ENCODE measurements at regions of chr2 and their contacts with region 1.

Region 1: DNA sequence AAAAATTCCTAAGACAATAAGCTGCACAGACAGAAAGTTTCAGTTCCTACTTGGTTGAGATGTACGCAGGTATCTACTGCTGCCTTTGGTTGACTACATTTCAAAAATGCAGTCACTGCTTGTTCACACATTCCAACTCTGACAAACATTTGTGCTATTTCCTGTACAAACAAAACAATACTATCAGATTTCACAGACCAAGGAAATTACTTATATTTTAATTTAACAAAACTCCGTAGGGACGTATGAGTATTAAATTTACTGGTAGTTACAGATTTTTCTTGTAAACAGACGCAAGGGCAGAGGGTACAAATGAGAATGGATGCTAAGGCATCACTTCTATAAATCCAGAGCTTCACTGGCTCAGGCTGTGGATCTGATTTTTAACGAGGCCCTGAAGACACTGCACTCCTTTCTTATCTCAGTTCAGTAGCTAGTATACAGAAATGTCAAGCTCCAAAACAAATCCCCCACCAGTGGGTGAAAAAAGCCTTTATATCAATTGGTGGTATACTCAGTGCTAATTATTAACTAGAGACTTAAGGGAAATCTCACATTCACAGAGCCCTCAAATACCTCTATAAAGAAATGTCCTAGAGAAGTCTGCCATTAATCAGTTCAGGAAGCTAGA is 31.7 kb upstream of the TTC32 start:
- DNase-seq: peak; percentile 33 to 95
- H3K4me3 ChIP-seq: peak overlapping the region; percentile 48
- H3K27ac ChIP-seq: peak overlapping the region; percentile 97
- H3K4me1 ChIP-seq: peaks cover 35% of the 10 kb centered on the region
- H3K27me3 ChIP-seq: no peaks in the 10 kb centered on the region
- CTCF ChIP-seq: 0 out of 2 replicates have a peak, but pooled peaks have one; percentile 13

Region 2: GRCh38 chr2:19819097-19820065 is 114.1 kb before region 1 on chr2:
- CTCF ChIA-PET with region 1: no interaction called
- POLR2A ChIA-PET with region 1: interaction called, 17 read pairs
- intact Hi-C with region 1: no loop called
- DNase-seq: peak; percentile 74 to 96
- H3K4me3 ChIP-seq: no peak overlapping the region
- H3K27ac ChIP-seq: peak overlapping the region; percentile 63
- H3K4me1 ChIP-seq: peaks cover 24% of the 10 kb centered on the region
- H3K27me3 ChIP-seq: no peaks in the 10 kb centered on the region
- CTCF ChIP-seq: no peak

Region 3: DNA sequence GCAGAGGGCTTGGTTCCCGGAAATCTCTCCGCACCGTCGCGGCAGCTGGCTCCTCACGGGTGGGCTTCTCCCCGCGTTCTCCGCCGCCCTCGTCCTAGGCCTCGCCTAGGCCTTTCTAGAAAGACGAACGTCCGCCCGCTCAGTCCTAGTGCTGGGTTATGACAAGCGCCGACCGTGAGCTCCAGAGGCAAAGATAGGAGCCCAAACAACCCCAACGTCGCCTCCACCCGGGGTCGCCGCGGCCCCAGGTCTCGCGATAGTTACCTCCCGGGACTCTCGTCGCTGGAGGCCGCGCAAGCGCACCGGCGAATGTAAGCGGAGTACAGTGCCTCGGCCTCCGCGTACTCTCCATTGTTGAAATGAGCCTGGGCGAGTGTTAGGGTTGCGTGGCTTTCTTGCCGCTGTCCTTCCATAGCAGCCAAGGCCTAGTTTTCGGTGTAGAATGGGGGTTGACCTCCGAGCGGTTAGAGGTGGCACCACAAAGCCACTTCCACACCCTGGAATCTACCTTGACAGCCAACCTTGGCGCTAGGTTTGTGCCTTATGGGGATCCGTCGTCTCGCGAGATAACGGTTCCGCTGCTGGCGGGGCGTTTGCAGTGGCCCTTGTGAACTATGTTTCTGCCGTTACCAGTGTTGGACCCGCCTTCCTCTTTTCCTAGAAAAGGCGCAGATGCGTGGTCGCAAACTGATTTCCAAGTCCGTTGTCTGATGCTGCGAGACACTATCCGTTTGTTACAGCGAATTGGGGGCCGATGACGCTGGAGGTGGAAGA is 31.8 kb before region 1 on chr2 and contains the start of gene TTC32:
- CTCF ChIA-PET with region 1: no interaction called
- POLR2A ChIA-PET with region 1: no interaction called
- intact Hi-C with region 1: loop called (anchors 1 kb)
- DNase-seq: peak; percentile 84 to 91
- H3K4me3 ChIP-seq: peak within 1 kb of the TSS; percentile 74
- H3K27ac ChIP-seq: peak within 1 kb of the TSS; percentile 88
- H3K4me1 ChIP-seq: peaks cover 41% of the 10 kb centered on the region
- H3K27me3 ChIP-seq: no peaks in the 10 kb centered on the region
- CTCF ChIP-seq: no peak
- total RNA-seq, gene TTC32: 27.9 and 36.2 TPM in 2 replicates

Region 4: GRCh38 chr2:19911799-19912509 is 21.5 kb before region 1 on chr2:
- CTCF ChIA-PET with region 1: no interaction called
- POLR2A ChIA-PET with region 1: no interaction called
- intact Hi-C with region 1: loop called (anchors 2 kb)
- DNase-seq: peak; percentile 81 to 100
- H3K4me3 ChIP-seq: no peak overlapping the region; the same call in 1 of the 2 replicates
- H3K27ac ChIP-seq: peak overlapping the region; percentile 87
- H3K4me1 ChIP-seq: peaks cover 34% of the 10 kb centered on the region
- H3K27me3 ChIP-seq: no peaks in the 10 kb centered on the region
- CTCF ChIP-seq: no peak

Region 5: GRCh38 chr2:20313659-20314058 is 380.2 kb after region 1 on chr2:
- CTCF ChIA-PET with region 1: no interaction called
- POLR2A ChIA-PET with region 1: no interaction called
- intact Hi-C with region 1: no loop called
- DNase-seq: no peak
- H3K4me3 ChIP-seq: no peak overlapping the region
- H3K27ac ChIP-seq: no peak overlapping the region
- H3K4me1 ChIP-seq: no peaks in the 10 kb centered on the region
- H3K27me3 ChIP-seq: no peaks in the 10 kb centered on the region
- CTCF ChIP-seq: no peak

Region 6: GRCh38 chr2:20595431-20596192 is 662.1 kb after region 1 on chr2:
- CTCF ChIA-PET with region 1: no interaction called
- POLR2A ChIA-PET with region 1: interaction called, 18 read pairs
- intact Hi-C with region 1: no loop called
- DNase-seq: peak; percentile 25 to 92
- H3K4me3 ChIP-seq: peak overlapping the region; percentile 5; the same call in 1 of the 2 replicates
- H3K27ac ChIP-seq: peak overlapping the region; percentile 96
- H3K4me1 ChIP-seq: peaks cover 76% of the 10 kb centered on the region
- H3K27me3 ChIP-seq: no peaks in the 10 kb centered on the region
- CTCF ChIP-seq: no peak; the same call in 1 of the 2 replicates

Measured in PC-9 (cell line).